HAP-1 (cell line): ENCODE measurements at regions of chr18 and their contacts with region 1.

Region 1: GRCh38 chr18:6414118-6414722 is 491 bp downstream of the L3MBTL4 start:
- DNase-seq: no peak
- H3K4me3 ChIP-seq: no peak overlapping the region
- H3K4me1 ChIP-seq: no peaks in the 10 kb centered on the region
- H3K27me3 ChIP-seq: no peaks in the 10 kb centered on the region

Region 2: DNA sequence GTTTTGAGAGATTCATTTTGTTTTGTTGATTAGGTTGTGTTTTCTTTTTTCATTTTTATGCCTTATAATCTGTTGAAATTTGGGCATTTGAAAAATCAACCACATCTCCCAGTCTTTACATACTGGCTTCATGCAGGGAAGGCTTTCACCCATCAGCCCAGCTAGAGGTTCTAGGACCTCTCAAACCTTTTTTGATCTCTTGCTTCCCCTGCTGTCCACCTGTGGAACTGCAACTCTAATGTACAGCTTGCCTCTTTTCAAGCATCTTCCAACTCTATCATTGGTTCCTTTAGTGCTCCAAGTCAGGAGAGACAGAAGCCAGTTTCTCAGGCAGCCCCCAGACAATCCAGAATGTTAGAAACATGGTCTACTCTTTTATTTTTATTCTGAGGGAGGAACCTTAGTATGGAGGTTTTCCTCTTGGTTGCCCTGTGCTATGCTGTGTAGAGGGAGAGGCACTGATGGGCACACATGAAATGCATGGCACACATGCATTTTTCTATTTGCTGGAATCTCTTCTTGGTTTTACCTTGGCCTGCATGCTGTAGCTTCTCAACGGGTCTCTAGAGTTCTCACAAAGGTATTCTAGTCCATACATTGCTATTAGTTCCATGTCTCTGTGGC is 107.7 kb after region 1 on chr18:
- in situ Hi-C with region 1: loop called (anchors 25 kb)
- DNase-seq: peak in 1 of 2 experiments; percentile 31
- H3K4me3 ChIP-seq: no peak overlapping the region
- H3K4me1 ChIP-seq: no peaks in the 10 kb centered on the region
- H3K27me3 ChIP-seq: no peaks in the 10 kb centered on the region

Region 3: DNA sequence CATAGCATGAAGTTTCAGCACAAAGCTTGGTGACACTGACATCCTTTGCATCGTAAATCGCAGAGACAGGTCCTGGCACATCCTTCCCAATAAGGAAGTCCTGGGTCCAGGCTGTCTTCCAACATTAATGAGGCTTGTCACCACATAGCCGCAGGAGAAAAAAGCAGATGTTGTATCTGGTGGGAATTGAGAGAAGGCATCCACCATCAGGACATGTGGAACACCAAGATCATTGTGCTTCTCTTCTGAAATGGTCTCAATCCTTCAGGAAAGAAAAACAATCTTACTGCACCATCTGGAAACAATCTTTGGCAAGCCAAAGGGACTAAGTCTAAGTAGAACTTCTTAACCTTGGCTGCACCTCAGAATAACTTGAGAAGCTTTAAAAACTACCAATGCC is 196.2 kb after region 1 on chr18:
- in situ Hi-C with region 1: no loop called
- DNase-seq: no peak
- H3K4me3 ChIP-seq: no peak overlapping the region
- H3K4me1 ChIP-seq: no peaks in the 10 kb centered on the region
- H3K27me3 ChIP-seq: no peaks in the 10 kb centered on the region

Region 4: GRCh38 chr18:6885992-6886796 is 472.0 kb after region 1 on chr18:
- in situ Hi-C with region 1: no loop called
- DNase-seq: peak; percentile 4 to 41
- H3K4me3 ChIP-seq: no peak overlapping the region
- H3K4me1 ChIP-seq: no peaks in the 10 kb centered on the region
- H3K27me3 ChIP-seq: no peaks in the 10 kb centered on the region